ENCODE measurements at regions of chr12 and their contacts with region 1.

Region 1: GRCh38 chr12:6423267-6424007 is 21.3 kb upstream of the CD27 start:
- DNase-seq: peak; percentile 88
- H3K4me3 Mint-ChIP-seq: peak overlapping the region; percentile 52
- H3K27ac Mint-ChIP-seq: peak overlapping the region; percentile 51
- H3K4me1 Mint-ChIP-seq: peaks cover 48% of the 10 kb centered on the region
- H3K27me3 Mint-ChIP-seq: no peaks in the 10 kb centered on the region

Region 2: GRCh38 chr12:6335451-6336078 is 87.9 kb before region 1 on chr12:
- CTCF ChIA-PET with region 1: interaction called, 20 read pairs
- intact Hi-C with region 1: loop called (anchors 1 kb)
- DNase-seq: peak; percentile 94
- H3K4me3 Mint-ChIP-seq: no peak overlapping the region
- H3K27ac Mint-ChIP-seq: no peak overlapping the region
- H3K4me1 Mint-ChIP-seq: peaks cover 46% of the 10 kb centered on the region
- H3K27me3 Mint-ChIP-seq: no peaks in the 10 kb centered on the region

Region 3: GRCh38 chr12:6451348-6452244 is 28.2 kb after region 1 on chr12 and contains the start of gene TAPBPL:
- CTCF ChIA-PET with region 1: interaction called, 73 read pairs
- intact Hi-C with region 1: loop called (anchors 1 kb)
- DNase-seq: peak; percentile 93
- H3K4me3 Mint-ChIP-seq: peak within 1 kb of the TSS; percentile 98
- H3K27ac Mint-ChIP-seq: peak within 1 kb of the TSS; percentile 98
- H3K4me1 Mint-ChIP-seq: peaks cover 65% of the 10 kb centered on the region
- H3K27me3 Mint-ChIP-seq: no peaks in the 10 kb centered on the region
- total RNA-seq, gene TAPBPL: 27.9 to 28.0 TPM

Region 4: DNA sequence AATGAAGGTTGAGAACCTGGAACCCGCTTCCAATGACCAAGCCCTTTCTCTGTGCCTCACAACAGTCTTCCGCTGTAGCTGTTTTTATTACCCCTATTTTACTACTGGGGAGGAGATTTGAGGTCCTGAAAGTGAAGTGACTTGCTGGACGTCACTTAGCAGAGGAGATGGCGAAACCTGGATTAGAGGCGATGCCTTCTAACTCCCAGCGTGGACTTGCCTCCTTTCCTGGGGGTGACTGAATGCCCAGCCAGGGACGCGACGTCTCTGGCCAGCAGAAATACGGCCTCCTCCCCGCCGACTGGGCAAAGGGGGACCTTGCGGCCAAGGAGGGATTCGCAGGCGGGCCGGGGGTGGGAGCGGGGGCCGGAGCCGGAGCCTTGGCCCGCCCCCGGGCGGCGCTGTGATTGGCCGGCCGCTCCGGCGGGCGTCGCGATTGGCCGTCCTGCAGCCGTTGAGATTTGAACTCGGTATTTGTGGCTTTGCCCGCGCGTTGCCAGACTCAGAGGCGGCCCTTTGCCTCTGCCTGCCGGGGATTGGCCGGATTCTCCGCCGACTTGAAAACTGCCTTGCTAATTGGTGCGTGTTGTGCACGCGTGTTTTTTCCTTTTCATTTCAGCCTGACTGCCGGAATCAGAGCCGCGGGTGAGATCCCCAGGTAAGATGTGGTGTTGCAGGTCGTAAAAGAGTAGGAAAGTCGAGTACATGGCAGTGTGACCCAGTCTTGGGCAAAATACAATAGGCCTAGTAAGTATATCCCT is 70.2 kb after region 1 on chr12 and contains the start of gene NCAPD2:
- CTCF ChIA-PET with region 1: interaction called, 8 read pairs
- intact Hi-C with region 1: loop called (anchors 1 kb)
- DNase-seq: peak; percentile 98
- H3K4me3 Mint-ChIP-seq: peak within 1 kb of the TSS; percentile 98
- H3K27ac Mint-ChIP-seq: peak within 1 kb of the TSS; percentile 99
- H3K4me1 Mint-ChIP-seq: peaks cover 33% of the 10 kb centered on the region
- H3K27me3 Mint-ChIP-seq: no peaks in the 10 kb centered on the region
- total RNA-seq, gene NCAPD2: 252 to 261 TPM

Region 5: DNA sequence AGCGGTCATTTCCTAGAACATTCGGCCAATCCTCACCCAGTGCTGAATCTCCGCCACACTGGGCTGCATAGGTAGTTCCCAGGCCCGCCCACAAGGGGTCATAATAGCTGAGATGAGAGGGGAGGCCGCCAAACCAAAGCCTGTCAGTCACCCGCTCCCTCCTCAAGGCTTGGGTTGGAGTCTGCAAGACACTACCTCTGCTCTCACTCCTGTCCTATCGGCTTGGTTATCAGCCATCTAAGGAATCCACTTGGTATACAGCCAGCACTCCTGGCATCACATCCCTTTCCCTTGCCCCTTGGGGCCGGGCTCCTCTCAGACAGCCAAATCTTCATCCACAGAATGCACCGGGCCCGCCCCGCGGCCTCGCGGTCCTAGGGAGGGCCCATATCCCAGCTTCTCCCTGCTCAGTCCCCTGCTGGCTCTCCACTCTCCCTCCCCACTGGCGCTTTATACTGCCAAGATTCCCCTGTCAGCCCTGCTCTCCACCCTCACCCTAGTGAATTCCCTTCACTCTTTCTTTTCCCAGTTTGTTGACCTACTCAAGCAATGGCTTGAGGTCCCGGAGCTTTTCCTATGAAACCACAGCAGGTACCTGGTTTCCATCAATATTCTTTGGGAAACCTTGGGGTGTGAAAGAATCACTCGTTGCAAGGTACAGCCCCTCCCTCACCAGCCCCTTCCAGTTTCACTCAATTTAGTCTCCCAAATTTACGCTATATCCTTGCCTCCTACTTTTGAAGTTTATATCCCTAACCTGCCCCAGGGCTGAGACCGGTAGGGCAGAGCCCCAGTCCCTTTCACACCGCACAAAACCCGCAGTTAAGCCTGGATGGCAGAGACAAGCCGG is 131.0 kb after region 1 on chr12:
- CTCF ChIA-PET with region 1: interaction called, 26 read pairs
- intact Hi-C with region 1: loop called (anchors 1 kb)
- DNase-seq: peak; percentile 86
- H3K4me3 Mint-ChIP-seq: peak overlapping the region; percentile 78
- H3K27ac Mint-ChIP-seq: peak overlapping the region; percentile 1
- H3K4me1 Mint-ChIP-seq: peaks cover 52% of the 10 kb centered on the region
- H3K27me3 Mint-ChIP-seq: no peaks in the 10 kb centered on the region

Region 6: GRCh38 chr12:6839482-6840201 is 416.2 kb after region 1 on chr12:
- CTCF ChIA-PET with region 1: no interaction called
- intact Hi-C with region 1: no loop called
- DNase-seq: no peak
- H3K4me3 Mint-ChIP-seq: no peak overlapping the region
- H3K27ac Mint-ChIP-seq: peak overlapping the region; percentile 36
- H3K4me1 Mint-ChIP-seq: peaks cover 3% of the 10 kb centered on the region
- H3K27me3 Mint-ChIP-seq: no peaks in the 10 kb centered on the region